Mammary epithelial cell (primary cell): ENCODE measurements at regions of chr1 and their contacts with region 1.

Region 1: GRCh38 chr1:65958561-65959350 is 166.1 kb downstream of the PDE4B start:
- DNase-seq: peak; percentile 31
- H3K4me3 ChIP-seq: no peak overlapping the region
- H3K27ac ChIP-seq: no peak overlapping the region
- H3K4me1 ChIP-seq: no peaks in the 10 kb centered on the region
- H3K27me3 ChIP-seq: no peaks in the 10 kb centered on the region
- CTCF ChIP-seq: peak; percentile 50 to 60

Region 2: GRCh38 chr1:65235867-65236805 is 722.6 kb before region 1 on chr1:
- CTCF ChIA-PET with region 1: no interaction called
- dilution Hi-C with region 1: no loop called
- in situ Hi-C with region 1: no loop called
- intact Hi-C with region 1: loop called (anchors 5 kb)
- DNase-seq: peak; percentile 33
- H3K4me3 ChIP-seq: no peak overlapping the region
- H3K27ac ChIP-seq: no peak overlapping the region
- H3K4me1 ChIP-seq: peaks cover under 1% of the 10 kb centered on the region
- H3K27me3 ChIP-seq: no peaks in the 10 kb centered on the region
- CTCF ChIP-seq: peak; percentile 60 to 61

Region 3: GRCh38 chr1:66242646-66243547 is 284.1 kb after region 1 on chr1:
- CTCF ChIA-PET with region 1: no interaction called
- dilution Hi-C with region 1: no loop called
- in situ Hi-C with region 1: loop called (anchors 5 to 10 kb)
- intact Hi-C with region 1: loop called (anchors 1 kb)
- DNase-seq: peak; percentile 77
- H3K4me3 ChIP-seq: no peak overlapping the region
- H3K27ac ChIP-seq: no peak overlapping the region
- H3K4me1 ChIP-seq: peaks cover 11% of the 10 kb centered on the region
- H3K27me3 ChIP-seq: peaks cover 4% of the 10 kb centered on the region
- CTCF ChIP-seq: peak; percentile 98 to 100

Region 4: DNA sequence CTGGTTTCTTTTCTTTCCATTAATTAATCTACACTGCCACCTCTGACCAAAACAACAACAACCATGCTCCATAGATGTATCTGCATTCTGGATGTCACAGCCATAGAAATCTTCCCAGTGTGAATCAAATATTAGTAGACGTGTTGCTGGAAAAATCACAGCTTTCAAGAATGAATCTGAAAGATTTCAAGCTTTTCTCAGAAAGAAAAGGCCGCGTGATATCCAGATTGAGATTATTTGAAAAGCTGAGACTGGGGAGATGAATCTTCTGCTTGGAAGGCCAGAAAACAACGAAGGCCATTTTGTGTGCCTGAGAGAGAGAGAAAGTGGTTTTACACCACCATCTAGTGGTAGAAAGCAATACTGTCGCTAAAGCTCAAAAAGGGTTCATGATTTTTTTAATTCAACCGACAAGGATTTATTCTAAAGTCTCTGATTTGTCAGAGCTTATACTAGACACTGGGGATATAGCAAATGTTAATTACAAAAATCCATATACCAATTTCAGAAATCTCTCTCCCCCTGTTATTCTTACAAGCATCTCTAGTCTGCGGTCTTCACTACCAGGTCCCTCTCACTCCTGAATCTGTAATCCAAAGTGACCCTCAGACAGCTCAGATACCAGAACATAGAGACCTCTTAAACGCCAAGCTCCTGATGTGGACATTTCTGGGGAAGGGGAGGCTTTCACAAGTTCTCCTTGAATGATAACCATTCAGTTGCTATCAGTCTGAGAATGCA is 487.7 kb after region 1 on chr1:
- CTCF ChIA-PET with region 1: no interaction called
- dilution Hi-C with region 1: no loop called
- in situ Hi-C with region 1: loop called (anchors 25 kb)
- intact Hi-C with region 1: loop called (anchors 1 kb)
- DNase-seq: peak; percentile 46
- H3K4me3 ChIP-seq: no peak overlapping the region
- H3K27ac ChIP-seq: no peak overlapping the region
- H3K4me1 ChIP-seq: no peaks in the 10 kb centered on the region
- H3K27me3 ChIP-seq: peaks cover 3% of the 10 kb centered on the region
- CTCF ChIP-seq: peak; percentile 77 to 85

Region 5: GRCh38 chr1:66464802-66465201 is 506.0 kb after region 1 on chr1:
- CTCF ChIA-PET with region 1: no interaction called
- dilution Hi-C with region 1: no loop called
- in situ Hi-C with region 1: loop called (anchors 25 kb)
- intact Hi-C with region 1: no loop called
- DNase-seq: peak; percentile 93
- H3K4me3 ChIP-seq: no peak overlapping the region
- H3K27ac ChIP-seq: peak overlapping the region; percentile 57
- H3K4me1 ChIP-seq: peaks cover 12% of the 10 kb centered on the region
- H3K27me3 ChIP-seq: no peaks in the 10 kb centered on the region
- CTCF ChIP-seq: no peak

Region 6: GRCh38 chr1:66711420-66711819 is 752.7 kb after region 1 on chr1:
- CTCF ChIA-PET with region 1: no interaction called
- dilution Hi-C with region 1: no loop called
- in situ Hi-C with region 1: no loop called
- intact Hi-C with region 1: loop called (anchors 10 kb)
- DNase-seq: no peak
- H3K4me3 ChIP-seq: no peak overlapping the region
- H3K27ac ChIP-seq: no peak overlapping the region
- H3K4me1 ChIP-seq: no peaks in the 10 kb centered on the region
- H3K27me3 ChIP-seq: peaks cover 8% of the 10 kb centered on the region
- CTCF ChIP-seq: peak; percentile 19 to 33